CD8-positive, alpha-beta T cell (primary cell): ENCODE measurements at regions of chr17 and their contacts with region 1.

Region 1: DNA sequence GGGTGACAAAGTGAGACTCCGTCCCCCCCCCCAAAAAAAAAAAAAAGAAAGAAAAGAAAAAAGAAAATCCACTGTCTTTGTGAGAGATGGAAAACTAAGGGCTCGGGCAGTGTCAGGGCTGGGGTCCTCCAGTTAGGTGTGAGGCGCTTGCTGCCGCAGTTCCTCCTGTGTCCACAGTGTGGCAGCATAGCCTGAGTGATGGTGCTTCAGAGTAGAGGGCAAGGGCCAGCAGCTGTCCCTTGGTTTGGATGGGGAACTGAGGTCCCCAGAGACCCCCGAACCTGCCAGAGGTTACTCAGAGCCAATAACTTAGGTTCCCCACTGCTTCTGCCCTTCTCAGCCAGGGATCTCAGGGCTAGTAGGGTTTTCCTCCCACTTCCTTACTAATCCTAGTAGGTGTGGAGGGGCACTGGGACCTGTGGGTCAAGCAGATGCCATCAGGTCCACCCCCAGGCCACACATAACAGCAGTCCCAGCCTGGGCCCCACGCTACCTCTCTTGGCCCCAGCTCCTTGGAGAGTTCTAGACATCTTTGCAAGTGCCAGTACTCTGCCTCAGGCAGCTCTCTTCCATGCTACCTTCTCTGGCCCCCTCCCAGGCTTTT is 7.9 kb upstream of the LLGL1 start:
- DNase-seq: peak; percentile 55 to 79 (median 75)
- ATAC-seq: peak; percentile 98
- H3K4me3 ChIP-seq: no peak overlapping the region
- H3K4me3 Mint-ChIP-seq: no peak overlapping the region
- H3K27ac ChIP-seq: no peak overlapping the region
- H3K27ac Mint-ChIP-seq: no peak overlapping the region
- H3K4me1 ChIP-seq: no peaks in the 10 kb centered on the region
- H3K4me1 Mint-ChIP-seq: peaks cover 1% of the 10 kb centered on the region
- H3K27me3 ChIP-seq: no peaks in the 10 kb centered on the region
- H3K27me3 Mint-ChIP-seq: no peaks in the 10 kb centered on the region
- CTCF ChIP-seq: peak; percentile 74

Region 2: DNA sequence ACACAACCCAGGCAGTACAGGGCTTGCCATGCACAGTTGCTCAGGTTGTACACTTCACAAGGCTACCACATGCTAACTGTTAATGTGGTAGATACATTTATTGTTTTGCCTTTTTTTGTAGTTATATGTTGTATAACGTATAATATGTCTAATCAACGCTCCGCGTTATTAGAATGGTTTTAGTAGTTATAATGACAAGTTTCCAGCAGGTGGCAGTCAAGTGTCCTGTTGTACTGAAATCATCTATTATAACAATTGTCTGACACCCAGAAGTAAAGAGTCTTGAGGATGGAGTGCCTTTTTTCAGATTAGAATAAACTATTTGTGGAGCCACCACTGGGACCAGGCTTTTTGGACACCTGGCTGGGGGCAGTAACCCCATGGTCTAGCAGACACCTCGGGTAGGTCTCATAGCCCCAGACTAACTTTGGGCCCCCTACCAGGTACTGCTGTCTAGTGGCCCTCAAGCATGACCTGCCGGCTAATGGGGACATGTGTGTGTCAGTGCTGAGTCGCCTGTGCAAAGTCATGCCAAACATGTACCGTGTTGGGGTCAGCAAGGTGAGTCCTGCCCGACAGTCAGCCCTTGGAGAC is 76.2 kb before region 1 on chr17:
- CTCF ChIA-PET with region 1: interaction called, 25 read pairs
- POLR2A ChIA-PET with region 1: no interaction called
- intact Hi-C with region 1: loop called (anchors 1 to 2 kb)
- DNase-seq: peak in 7 of 9 experiments; percentile 13 to 77 (median 44)
- ATAC-seq: peak; percentile 89
- H3K4me3 ChIP-seq: no peak overlapping the region
- H3K4me3 Mint-ChIP-seq: no peak overlapping the region
- H3K27ac ChIP-seq: no peak overlapping the region
- H3K27ac Mint-ChIP-seq: no peak overlapping the region
- H3K4me1 ChIP-seq: peaks cover 9% of the 10 kb centered on the region
- H3K4me1 Mint-ChIP-seq: peaks cover 4% of the 10 kb centered on the region
- H3K27me3 ChIP-seq: no peaks in the 10 kb centered on the region
- H3K27me3 Mint-ChIP-seq: peaks cover 2% of the 10 kb centered on the region
- CTCF ChIP-seq: peak; percentile 73

Region 3: GRCh38 chr17:18203308-18203707 is 14.2 kb before region 1 on chr17:
- CTCF ChIA-PET with region 1: interaction called, 17 read pairs
- POLR2A ChIA-PET with region 1: no interaction called
- intact Hi-C with region 1: no loop called
- DNase-seq: no peak
- ATAC-seq: no peak
- H3K4me3 ChIP-seq: no peak overlapping the region
- H3K4me3 Mint-ChIP-seq: no peak overlapping the region
- H3K27ac ChIP-seq: no peak overlapping the region
- H3K27ac Mint-ChIP-seq: no peak overlapping the region
- H3K4me1 ChIP-seq: peaks cover 24% of the 10 kb centered on the region
- H3K4me1 Mint-ChIP-seq: peaks cover 40% of the 10 kb centered on the region
- H3K27me3 ChIP-seq: no peaks in the 10 kb centered on the region
- H3K27me3 Mint-ChIP-seq: no peaks in the 10 kb centered on the region
- CTCF ChIP-seq: no peak

Region 4: GRCh38 chr17:18231164-18231563 is 13.7 kb after region 1 on chr17:
- CTCF ChIA-PET with region 1: interaction called, 10 read pairs
- POLR2A ChIA-PET with region 1: no interaction called
- intact Hi-C with region 1: no loop called
- DNase-seq: no peak
- ATAC-seq: no peak
- H3K4me3 ChIP-seq: no peak overlapping the region
- H3K4me3 Mint-ChIP-seq: no peak overlapping the region
- H3K27ac ChIP-seq: no peak overlapping the region
- H3K27ac Mint-ChIP-seq: no peak overlapping the region
- H3K4me1 ChIP-seq: peaks cover 10% of the 10 kb centered on the region
- H3K4me1 Mint-ChIP-seq: peaks cover 25% of the 10 kb centered on the region
- H3K27me3 ChIP-seq: no peaks in the 10 kb centered on the region
- H3K27me3 Mint-ChIP-seq: no peaks in the 10 kb centered on the region
- CTCF ChIP-seq: no peak